ENCODE measurements at regions of chr4 and their contacts with region 1.

Region 1: DNA sequence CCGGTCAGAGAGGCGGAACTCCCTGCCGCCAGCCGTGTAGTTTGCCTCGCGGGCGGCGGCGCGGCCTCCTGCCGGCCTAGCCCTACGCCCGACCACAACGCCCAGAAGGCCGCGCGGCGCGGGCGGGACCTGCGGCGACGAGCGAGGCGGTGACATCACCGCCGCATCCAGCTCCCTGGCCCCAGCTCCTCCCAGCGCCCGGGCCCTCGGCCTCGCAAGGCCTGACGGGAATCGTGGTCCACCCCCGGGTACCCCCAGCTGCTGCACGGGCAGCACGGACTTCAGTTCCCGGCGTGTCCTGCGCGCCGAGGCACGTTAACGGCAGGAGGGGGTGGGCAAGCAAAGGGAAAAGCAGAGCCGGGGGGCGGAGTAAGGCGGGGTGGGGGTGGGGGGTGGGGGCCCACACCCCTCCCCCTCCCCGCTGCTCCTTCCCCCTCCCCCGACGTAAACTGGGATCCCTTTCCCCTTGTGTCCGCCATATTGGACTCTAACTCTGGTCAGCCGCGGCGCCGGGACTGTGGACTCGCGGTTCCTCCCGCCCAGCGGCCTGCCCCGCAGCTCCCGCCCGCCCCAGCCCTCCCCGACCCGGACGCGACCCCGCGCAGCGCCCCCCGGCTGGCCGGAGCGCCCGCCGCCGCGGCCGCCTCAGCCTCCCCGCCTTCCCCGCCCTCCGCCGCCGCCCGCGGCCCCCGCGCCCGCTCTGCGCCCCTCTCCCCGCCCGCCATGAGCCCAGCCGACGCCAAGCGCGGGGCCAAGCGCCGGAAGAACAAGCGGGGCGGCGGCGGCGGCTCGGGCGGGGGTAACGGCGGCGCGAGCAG is at the start of gene FAM193A:
- DNase-seq: peak; percentile 100
- ATAC-seq: peak; percentile 90
- H3K4me3 ChIP-seq: peak within 1 kb of the TSS; percentile 99
- H3K27ac ChIP-seq: peak within 1 kb of the TSS; percentile 92
- H3K4me1 ChIP-seq: peaks cover 4% of the 10 kb centered on the region; the same call in 1 of the 2 replicates
- H3K27me3 ChIP-seq: no peaks in the 10 kb centered on the region
- CTCF ChIP-seq: no peak
- POLR2A ChIP-seq: peak; percentile 77
- RAD21 ChIP-seq: no peak
- total RNA-seq, gene FAM193A: 6.8 and 8.1 TPM in 2 replicates

Region 2: GRCh38 chr4:2468445-2469192 is 67.8 kb before region 1 on chr4 and contains the start of gene RNF4:
- CTCF ChIA-PET with region 1: no interaction called
- POLR2A ChIA-PET with region 1: no interaction called
- dilution Hi-C with region 1: no loop called
- in situ Hi-C with region 1: no loop called
- intact Hi-C with region 1: no loop called
- DNase-seq: peak; percentile 95
- ATAC-seq: peak; percentile 93
- H3K4me3 ChIP-seq: peak within 1 kb of the TSS; percentile 83
- H3K27ac ChIP-seq: peak within 1 kb of the TSS; percentile 80
- H3K4me1 ChIP-seq: no peaks in the 10 kb centered on the region
- H3K27me3 ChIP-seq: no peaks in the 10 kb centered on the region
- CTCF ChIP-seq: no peak
- POLR2A ChIP-seq: peak; percentile 86
- RAD21 ChIP-seq: no peak
- total RNA-seq, gene RNF4: 63.8 and 64.4 TPM in 2 replicates

Region 3: DNA sequence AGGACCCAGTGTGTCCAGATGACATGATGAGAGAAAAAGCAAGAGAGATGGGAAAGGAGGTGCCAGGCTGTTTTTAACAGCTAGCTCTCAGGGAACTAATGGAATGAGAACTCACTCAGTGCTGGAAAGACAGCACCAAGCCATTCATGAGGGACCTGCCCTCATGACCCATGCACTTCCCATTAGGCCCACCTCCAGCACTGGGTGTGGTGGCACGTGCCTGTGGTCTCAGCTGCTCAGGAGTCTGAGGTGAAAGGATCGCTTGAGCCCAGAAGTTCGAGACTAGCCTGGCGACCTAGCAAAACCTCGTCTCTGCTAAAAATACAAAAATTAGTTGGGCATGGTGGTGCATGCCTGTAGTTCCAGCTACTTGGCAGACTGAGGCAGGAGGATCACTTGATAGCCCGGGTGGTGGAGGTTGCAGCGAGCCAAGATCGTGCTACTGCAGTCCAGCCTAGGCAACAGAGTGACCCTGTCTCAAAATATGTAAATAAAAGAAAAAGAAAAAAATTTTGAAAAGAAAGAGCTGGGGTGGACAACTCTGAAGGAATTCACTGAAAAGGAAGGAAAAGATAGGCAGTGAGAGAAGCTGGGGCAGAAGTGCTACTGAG is 50.9 kb after region 1 on chr4:
- CTCF ChIA-PET with region 1: no interaction called
- POLR2A ChIA-PET with region 1: no interaction called
- dilution Hi-C with region 1: no loop called
- in situ Hi-C with region 1: no loop called
- intact Hi-C with region 1: loop called (anchors 2 kb)
- DNase-seq: peak; percentile 32
- ATAC-seq: peak; percentile 56
- H3K4me3 ChIP-seq: no peak overlapping the region
- H3K27ac ChIP-seq: peak overlapping the region; percentile 36; the same call in 1 of the 2 replicates
- H3K4me1 ChIP-seq: peaks cover 21% of the 10 kb centered on the region
- H3K27me3 ChIP-seq: no peaks in the 10 kb centered on the region
- CTCF ChIP-seq: no peak
- POLR2A ChIP-seq: no peak
- RAD21 ChIP-seq: no peak

Region 4: GRCh38 chr4:2662598-2662997 is 126.2 kb after region 1 on chr4:
- CTCF ChIA-PET with region 1: no interaction called
- POLR2A ChIA-PET with region 1: no interaction called
- dilution Hi-C with region 1: no loop called
- in situ Hi-C with region 1: no loop called
- intact Hi-C with region 1: loop called (anchors 1 kb)
- DNase-seq: peak; percentile 93
- ATAC-seq: peak; percentile 62
- H3K4me3 ChIP-seq: no peak overlapping the region
- H3K27ac ChIP-seq: no peak overlapping the region
- H3K4me1 ChIP-seq: peaks cover 21% of the 10 kb centered on the region
- H3K27me3 ChIP-seq: no peaks in the 10 kb centered on the region
- CTCF ChIP-seq: 0 out of 2 replicates have a peak, but pooled peaks have one; percentile 6
- POLR2A ChIP-seq: no peak
- RAD21 ChIP-seq: no peak

Measured in IMR-90 (cell line).